ENCODE measurements at regions of chr7 and their contacts with region 1.

Region 1: DNA sequence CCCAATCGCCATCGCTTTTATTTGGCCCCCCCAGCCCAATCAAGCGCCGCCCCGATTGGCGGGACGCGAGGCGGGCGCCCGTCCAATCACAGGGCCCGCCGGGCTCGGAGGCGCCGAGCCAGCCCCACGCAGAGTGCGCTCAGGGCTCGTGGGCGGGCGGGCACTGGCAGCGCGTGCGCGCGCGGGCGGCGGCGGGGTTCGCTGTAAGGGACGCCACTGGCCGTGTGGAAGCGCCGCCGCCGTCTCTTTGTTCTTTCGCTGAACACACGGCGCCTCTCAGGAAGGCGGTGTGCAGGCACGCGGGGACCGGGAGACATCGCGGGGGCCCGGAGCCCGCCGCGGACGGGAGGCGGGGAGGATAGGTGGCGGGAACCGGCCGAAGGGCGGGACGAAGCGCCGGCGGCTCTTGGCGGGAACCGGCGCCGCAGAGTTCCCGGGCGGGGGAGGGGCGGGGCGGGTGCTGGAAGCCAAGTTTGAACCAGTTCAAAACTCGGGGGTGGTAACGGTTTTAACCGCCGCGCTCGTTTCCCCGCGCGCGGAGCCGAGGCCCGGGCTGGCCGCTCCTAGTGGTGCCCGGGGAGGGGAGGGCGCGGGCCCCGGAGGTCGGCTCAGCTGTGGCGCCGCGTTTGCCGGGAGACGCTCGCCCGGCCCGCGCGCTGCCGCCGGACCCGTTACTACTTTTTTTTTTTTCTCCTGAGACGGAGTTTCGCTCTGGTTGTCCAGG is 370 bp upstream of the EZH2 start:
- DNase-seq: peak; percentile 97
- ATAC-seq: peak; percentile 92
- H3K4me3 Mint-ChIP-seq: peak overlapping the region; percentile 95
- H3K27ac Mint-ChIP-seq: peak overlapping the region; percentile 99
- H3K4me1 Mint-ChIP-seq: peaks cover 34% of the 10 kb centered on the region
- H3K27me3 Mint-ChIP-seq: no peaks in the 10 kb centered on the region

Region 2: GRCh38 chr7:148856891-148857290 is 27.6 kb before region 1 on chr7:
- CTCF ChIA-PET with region 1: interaction called, 4 read pairs
- POLR2A ChIA-PET with region 1: interaction called, 4 read pairs
- intact Hi-C with region 1: loop called in 1 of 2 experiments (anchors 2 kb)
- DNase-seq: peak; percentile 45
- ATAC-seq: peak; percentile 87
- H3K4me3 Mint-ChIP-seq: peak overlapping the region; percentile 9
- H3K27ac Mint-ChIP-seq: peak overlapping the region; percentile 59
- H3K4me1 Mint-ChIP-seq: peaks cover 42% of the 10 kb centered on the region
- H3K27me3 Mint-ChIP-seq: no peaks in the 10 kb centered on the region

Region 3: DNA sequence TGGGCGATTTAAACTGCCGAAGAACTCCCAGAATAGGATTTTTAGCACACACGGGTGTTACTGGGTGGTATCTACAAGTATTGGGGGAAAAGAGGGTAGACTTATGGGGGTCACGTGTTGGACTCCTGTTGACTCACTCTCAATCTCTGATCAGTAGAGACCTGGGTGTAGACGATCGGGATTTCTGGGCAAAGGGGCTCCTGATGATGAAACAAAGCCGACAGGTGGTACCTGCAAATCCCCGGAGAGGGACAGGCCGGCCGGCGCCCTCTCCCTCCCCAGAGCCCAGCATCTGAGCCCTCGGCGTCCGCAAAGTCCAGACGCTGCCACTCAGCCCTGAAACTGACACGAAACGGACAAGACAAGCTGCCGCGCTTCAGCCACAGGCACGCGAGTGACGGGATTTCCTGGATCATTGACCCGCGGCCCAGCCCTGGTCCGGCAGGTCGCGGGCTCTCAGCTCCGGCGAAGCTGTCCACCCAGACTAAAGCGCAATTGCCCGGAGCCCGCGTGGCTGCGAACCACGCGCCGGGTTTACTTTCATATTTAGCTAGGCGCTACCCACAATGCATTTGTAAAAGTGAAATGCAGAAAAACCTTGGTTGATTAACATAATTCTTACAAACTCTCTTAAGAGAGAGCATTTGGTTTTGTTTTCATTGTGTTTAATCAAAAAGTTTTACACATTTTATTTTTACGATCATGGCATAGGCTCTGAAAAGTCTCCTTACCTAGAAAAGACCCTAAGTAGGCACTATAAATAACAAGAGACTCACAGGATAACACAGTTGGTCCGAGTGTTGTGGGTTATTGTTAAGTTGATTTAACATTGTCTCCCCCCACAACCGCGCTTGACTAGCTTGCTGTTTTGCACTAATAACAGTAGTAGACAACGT is 56.5 kb after region 1 on chr7:
- CTCF ChIA-PET with region 1: interaction called, 17 read pairs
- POLR2A ChIA-PET with region 1: interaction called, 40 read pairs
- intact Hi-C with region 1: loop called (anchors 1 kb)
- DNase-seq: peak; percentile 78
- ATAC-seq: peak; percentile 68
- H3K4me3 Mint-ChIP-seq: peak overlapping the region; percentile 98
- H3K27ac Mint-ChIP-seq: peak overlapping the region; percentile 100
- H3K4me1 Mint-ChIP-seq: peaks cover 16% of the 10 kb centered on the region
- H3K27me3 Mint-ChIP-seq: no peaks in the 10 kb centered on the region

Region 4: GRCh38 chr7:149090397-149091195 is 206.1 kb after region 1 on chr7 and contains the start of gene ZNF786:
- CTCF ChIA-PET with region 1: no interaction called
- POLR2A ChIA-PET with region 1: no interaction called
- intact Hi-C with region 1: loop called in 1 of 2 experiments (anchors 1 kb)
- DNase-seq: peak; percentile 97
- ATAC-seq: peak; percentile 87
- H3K4me3 Mint-ChIP-seq: peak within 1 kb of the TSS; percentile 89
- H3K27ac Mint-ChIP-seq: peak within 1 kb of the TSS; percentile 100
- H3K4me1 Mint-ChIP-seq: peaks cover 19% of the 10 kb centered on the region
- H3K27me3 Mint-ChIP-seq: no peaks in the 10 kb centered on the region
- total RNA-seq, gene ZNF786: 4.4 to 4.8 TPM

Region 5: GRCh38 chr7:149147072-149147751 is 262.8 kb after region 1 on chr7 and contains the start of gene ZNF398:
- CTCF ChIA-PET with region 1: interaction called, 4 read pairs
- POLR2A ChIA-PET with region 1: no interaction called
- intact Hi-C with region 1: loop called in 1 of 2 experiments (anchors 1 kb)
- DNase-seq: peak; percentile 87
- ATAC-seq: peak; percentile 71
- H3K4me3 Mint-ChIP-seq: peak within 1 kb of the TSS; percentile 98
- H3K27ac Mint-ChIP-seq: peak within 1 kb of the TSS; percentile 99
- H3K4me1 Mint-ChIP-seq: peaks cover 34% of the 10 kb centered on the region
- H3K27me3 Mint-ChIP-seq: no peaks in the 10 kb centered on the region
- total RNA-seq, gene ZNF398: 9.6 to 10.5 TPM

Region 6: GRCh38 chr7:149873074-149873969 is 988.9 kb after region 1 on chr7 and contains the start of gene ATP6V0E2:
- CTCF ChIA-PET with region 1: no interaction called
- POLR2A ChIA-PET with region 1: no interaction called
- intact Hi-C with region 1: loop called in 1 of 2 experiments (anchors 10 kb)
- DNase-seq: peak; percentile 96
- ATAC-seq: peak; percentile 84
- H3K4me3 Mint-ChIP-seq: peak within 1 kb of the TSS; percentile 82
- H3K27ac Mint-ChIP-seq: peak within 1 kb of the TSS; percentile 91
- H3K4me1 Mint-ChIP-seq: peaks cover 74% of the 10 kb centered on the region
- H3K27me3 Mint-ChIP-seq: no peaks in the 10 kb centered on the region
- total RNA-seq, gene ATP6V0E2: 33.9 to 41.3 TPM